Common myeloid progenitor, CD34-positive (primary cell): ENCODE measurements at regions of chr12 and their contacts with region 1.

Region 1: DNA sequence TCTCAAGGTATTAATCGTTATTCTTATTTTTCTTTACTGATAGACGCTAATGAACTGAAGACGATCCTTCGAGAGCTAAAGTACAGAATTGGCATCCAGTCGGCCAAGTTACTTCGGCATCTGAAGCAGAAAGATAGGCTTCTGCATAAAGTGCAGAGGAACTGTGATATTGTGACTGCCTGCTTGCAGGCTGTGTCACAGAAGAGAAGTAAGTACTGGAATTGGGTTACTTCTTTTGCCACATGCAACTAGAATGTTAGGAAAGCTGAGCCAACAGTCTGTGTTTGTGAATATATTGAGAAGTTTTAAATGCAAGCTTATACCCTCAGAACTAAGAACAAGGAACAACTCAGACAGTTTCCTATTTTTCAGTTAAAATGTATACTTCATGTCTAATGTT is 26.6 kb upstream of the GNS start:
- DNase-seq: no peak
- H3K4me3 ChIP-seq: no peak overlapping the region
- H3K27ac ChIP-seq: no peak overlapping the region
- H3K4me1 ChIP-seq: peaks cover 6 to 20% (median 18%) of the 10 kb centered on the region in 4 experiments
- H3K27me3 ChIP-seq: peaks cover 2 to 19% (median 14%) of the 10 kb centered on the region in 5 experiments

Region 2: DNA sequence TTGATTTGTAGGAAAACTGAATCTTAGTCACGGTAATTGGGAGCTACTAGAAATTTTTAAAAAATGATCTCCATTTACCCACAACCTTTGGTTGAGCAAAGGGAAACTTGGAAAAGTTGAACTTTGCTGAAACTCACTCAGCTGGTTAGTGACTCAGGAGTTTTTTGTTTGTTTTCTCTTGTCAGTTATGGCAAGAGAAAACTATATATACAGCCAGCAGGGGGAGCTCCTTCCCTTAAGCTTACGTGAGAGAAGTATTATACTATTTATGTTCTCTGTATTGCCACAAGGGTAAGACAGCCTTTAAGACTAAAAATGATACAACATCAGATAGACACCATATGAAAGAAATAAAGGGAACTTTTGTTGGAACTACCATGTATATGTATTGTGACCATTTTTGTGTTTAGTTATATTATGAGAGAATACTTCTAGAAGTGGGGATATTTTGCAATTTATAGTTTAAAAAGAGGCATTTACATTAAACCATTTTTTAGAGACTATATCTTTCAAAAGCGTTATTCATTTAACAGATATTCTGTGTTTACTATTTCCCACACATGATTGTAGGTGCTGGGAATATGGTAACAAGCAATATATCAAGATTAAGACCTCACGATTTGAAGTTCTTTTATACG is 10.5 kb after region 1 on chr12:
- CTCF ChIA-PET with region 1: interaction called, 24 read pairs
- POLR2A ChIA-PET with region 1: interaction called, 3 read pairs
- DNase-seq: peak; percentile 91 to 96 (median 95)
- H3K4me3 ChIP-seq: no peak overlapping the region
- H3K27ac ChIP-seq: no peak overlapping the region
- H3K4me1 ChIP-seq: no peaks in the 10 kb centered on the region
- H3K27me3 ChIP-seq: peaks cover 0 to 6% (median 0%) of the 10 kb centered on the region in 5 experiments